ENCODE measurements at regions of chr22 and their contacts with region 1.

Region 1: DNA sequence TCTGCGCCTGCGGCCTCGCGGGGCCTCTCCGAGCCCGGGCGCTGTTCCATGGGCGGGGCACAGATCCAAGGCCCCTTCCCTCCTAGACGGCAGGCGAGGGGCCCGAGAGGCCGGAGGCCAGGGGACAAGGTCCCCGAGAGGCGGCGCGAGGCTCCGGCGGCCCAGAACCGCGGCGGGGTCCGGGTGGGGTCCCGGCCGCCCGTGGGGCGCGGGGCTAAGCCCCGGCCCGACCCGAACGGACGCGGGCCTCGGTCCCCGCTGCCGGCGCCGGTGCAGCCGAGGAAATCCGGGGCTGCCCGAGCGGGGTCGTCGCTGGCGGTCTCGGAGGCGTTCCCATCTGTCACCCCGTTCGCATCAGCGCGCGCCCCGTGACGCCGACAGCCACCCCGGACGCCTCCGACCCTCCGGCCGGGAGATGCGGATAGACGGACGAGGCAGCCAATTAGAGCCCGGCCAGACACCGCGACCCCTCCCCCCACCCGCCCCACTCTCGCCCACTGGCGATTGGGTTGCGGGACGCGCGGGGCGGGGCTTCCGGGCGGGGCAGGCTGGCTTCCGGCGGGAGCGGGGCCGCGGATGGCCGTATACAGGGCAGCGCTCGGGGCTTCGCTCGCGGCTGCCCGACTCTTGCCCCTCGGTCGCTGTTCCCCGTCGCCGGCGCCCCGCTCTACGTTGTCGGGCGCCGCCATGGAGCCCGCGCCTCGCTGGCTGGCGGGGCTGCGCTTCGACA is at the start of gene SELENOO:
- DNase-seq: peak; percentile 85
- H3K4me3 ChIP-seq: peak within 1 kb of the TSS; percentile 63 to 86 (median 78)
- H3K27ac ChIP-seq: peak within 1 kb of the TSS; percentile 7
- H3K4me1 ChIP-seq: peaks cover 14% of the 10 kb centered on the region
- H3K27me3 ChIP-seq: no peaks in the 10 kb centered on the region
- CTCF ChIP-seq: no peak
- total RNA-seq, gene SELENOO: 21.5 to 36.9 TPM

Region 2: GRCh38 chr22:49753961-49754695 is 446.5 kb before region 1 on chr22:
- CTCF ChIA-PET with region 1: no interaction called
- dilution Hi-C with region 1: no loop called
- in situ Hi-C with region 1: no loop called
- intact Hi-C with region 1: no loop called
- DNase-seq: no peak
- H3K4me3 ChIP-seq: no peak overlapping the region
- H3K27ac ChIP-seq: no peak overlapping the region
- H3K4me1 ChIP-seq: no peaks in the 10 kb centered on the region
- H3K27me3 ChIP-seq: no peaks in the 10 kb centered on the region
- CTCF ChIP-seq: no peak

Region 3: GRCh38 chr22:49936018-49936952 is 264.3 kb before region 1 on chr22:
- CTCF ChIA-PET with region 1: no interaction called
- dilution Hi-C with region 1: no loop called
- in situ Hi-C with region 1: loop called in 1 of 2 experiments (anchors 25 kb)
- intact Hi-C with region 1: no loop called
- DNase-seq: peak; percentile 87
- H3K4me3 ChIP-seq: peak overlapping the region in 1 of 3 experiments; percentile 23
- H3K27ac ChIP-seq: no peak overlapping the region
- H3K4me1 ChIP-seq: peaks cover 18% of the 10 kb centered on the region
- H3K27me3 ChIP-seq: no peaks in the 10 kb centered on the region
- CTCF ChIP-seq: no peak

Region 4: DNA sequence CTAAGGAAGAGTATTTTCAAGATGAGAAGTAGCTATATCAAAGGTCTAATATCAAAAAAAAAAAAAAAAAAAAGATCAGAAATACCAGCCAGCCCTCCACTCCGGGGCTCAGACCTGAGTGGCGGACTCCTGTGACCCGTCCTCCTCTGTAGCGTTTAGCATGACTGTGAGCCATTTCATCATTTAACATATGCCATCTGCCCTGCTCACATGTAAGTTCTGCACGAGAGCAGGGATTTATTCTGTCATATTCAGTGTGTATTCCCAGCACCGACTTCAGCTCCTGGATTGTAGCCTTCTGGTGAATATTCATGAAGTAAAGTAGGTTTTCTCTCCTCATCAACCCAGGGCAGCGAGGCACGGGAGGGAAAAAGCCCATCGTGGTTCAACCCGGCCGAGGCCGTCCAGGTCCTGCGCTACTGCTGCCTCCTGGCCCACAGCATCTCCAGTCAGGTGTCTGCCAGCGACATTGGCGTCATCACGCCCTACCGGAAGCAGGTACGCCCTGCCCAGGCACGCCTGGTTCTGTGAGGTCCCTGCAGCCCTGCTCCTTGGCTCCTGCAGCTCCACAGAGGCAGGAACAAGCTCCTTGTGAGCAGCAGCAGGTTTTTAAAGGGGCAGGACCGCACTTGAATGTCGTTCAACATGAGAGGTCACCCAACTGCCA is 42.8 kb before region 1 on chr22:
- CTCF ChIA-PET with region 1: no interaction called
- dilution Hi-C with region 1: no loop called
- in situ Hi-C with region 1: loop called in 1 of 2 experiments (anchors 10 kb)
- intact Hi-C with region 1: loop called (anchors 2 kb)
- DNase-seq: peak; percentile 68
- H3K4me3 ChIP-seq: peak overlapping the region in 1 of 3 experiments; percentile 26
- H3K27ac ChIP-seq: no peak overlapping the region
- H3K4me1 ChIP-seq: peaks cover 10% of the 10 kb centered on the region
- H3K27me3 ChIP-seq: no peaks in the 10 kb centered on the region
- CTCF ChIP-seq: no peak

Region 5: GRCh38 chr22:50271519-50271970 is 70.9 kb after region 1 on chr22:
- CTCF ChIA-PET with region 1: no interaction called
- dilution Hi-C with region 1: no loop called
- in situ Hi-C with region 1: no loop called
- intact Hi-C with region 1: no loop called
- DNase-seq: peak; percentile 56
- H3K4me3 ChIP-seq: peak overlapping the region in 2 of 3 experiments; percentile 53
- H3K27ac ChIP-seq: no peak overlapping the region
- H3K4me1 ChIP-seq: peaks cover 29% of the 10 kb centered on the region
- H3K27me3 ChIP-seq: no peaks in the 10 kb centered on the region
- CTCF ChIP-seq: no peak

Region 6: DNA sequence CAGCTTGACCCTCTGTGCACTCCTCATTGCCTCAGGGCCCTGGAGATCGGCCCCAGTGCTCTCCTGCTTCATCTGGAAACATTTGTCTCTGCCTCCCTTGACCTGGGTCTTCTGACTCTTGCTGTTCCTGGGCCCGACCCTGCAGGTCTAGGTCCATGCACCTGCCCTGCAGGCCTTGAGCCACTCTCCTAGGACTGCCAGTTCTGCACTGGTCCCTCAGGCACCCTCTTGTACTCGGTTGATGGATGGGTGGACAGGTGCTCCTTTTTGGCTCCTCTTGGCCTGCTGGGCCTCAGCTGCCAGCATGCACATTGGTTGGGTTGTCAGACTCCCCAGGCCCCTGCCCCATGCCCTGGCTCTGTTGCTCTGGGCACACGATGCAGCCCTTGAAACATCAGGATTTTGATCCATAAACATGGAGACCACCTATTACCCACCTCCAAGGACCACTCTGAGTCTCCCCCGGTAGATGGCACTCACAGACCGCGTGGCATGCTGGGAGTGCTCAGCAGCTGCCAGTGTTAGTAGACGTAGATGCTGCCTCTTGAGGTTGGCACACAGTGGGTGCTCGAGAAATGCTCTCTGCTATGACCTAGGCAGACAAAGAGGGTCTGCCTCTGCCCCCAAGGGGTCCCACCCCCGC is 517.2 kb after region 1 on chr22:
- CTCF ChIA-PET with region 1: no interaction called
- dilution Hi-C with region 1: no loop called
- in situ Hi-C with region 1: no loop called
- intact Hi-C with region 1: no loop called
- DNase-seq: no peak
- H3K4me3 ChIP-seq: no peak overlapping the region
- H3K27ac ChIP-seq: no peak overlapping the region
- H3K4me1 ChIP-seq: no peaks in the 10 kb centered on the region
- H3K27me3 ChIP-seq: no peaks in the 10 kb centered on the region
- CTCF ChIP-seq: no peak